ENCODE measurements at regions of chr1 and their contacts with region 1.

Region 1: DNA sequence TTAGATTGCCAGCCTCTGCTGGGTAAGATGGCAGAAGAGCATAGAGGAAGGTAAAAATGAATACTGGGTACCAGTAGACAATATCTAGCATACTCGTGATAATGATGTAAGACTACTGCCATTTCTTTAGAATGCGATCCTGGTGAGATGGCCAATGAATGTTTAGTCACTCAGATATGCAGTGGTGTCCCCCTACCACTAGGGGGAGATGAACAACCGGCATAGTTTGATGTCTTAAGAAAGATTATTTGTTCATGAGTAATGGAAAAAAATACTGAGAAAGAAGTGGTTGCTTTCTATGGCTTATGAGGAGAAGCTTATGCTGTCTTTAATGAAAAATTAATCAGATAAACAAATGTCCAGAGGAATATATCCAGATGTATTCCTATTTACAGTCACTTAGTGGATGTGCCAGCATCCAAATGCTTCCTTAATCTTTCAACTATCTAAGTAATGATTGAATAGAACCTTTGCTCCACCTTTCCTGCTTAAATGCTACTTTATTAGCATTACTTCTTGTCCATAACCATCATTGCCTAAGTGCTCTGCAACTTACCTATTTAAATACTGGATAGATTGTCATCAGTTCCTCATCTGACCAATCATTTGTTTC is 256.6 kb downstream of the ST6GALNAC3 start:
- DNase-seq: peak; percentile 68
- H3K4me3 Mint-ChIP-seq: no peak overlapping the region
- H3K27ac Mint-ChIP-seq: no peak overlapping the region
- H3K4me1 Mint-ChIP-seq: peaks cover 14% of the 10 kb centered on the region
- H3K27me3 Mint-ChIP-seq: no peaks in the 10 kb centered on the region

Region 2: DNA sequence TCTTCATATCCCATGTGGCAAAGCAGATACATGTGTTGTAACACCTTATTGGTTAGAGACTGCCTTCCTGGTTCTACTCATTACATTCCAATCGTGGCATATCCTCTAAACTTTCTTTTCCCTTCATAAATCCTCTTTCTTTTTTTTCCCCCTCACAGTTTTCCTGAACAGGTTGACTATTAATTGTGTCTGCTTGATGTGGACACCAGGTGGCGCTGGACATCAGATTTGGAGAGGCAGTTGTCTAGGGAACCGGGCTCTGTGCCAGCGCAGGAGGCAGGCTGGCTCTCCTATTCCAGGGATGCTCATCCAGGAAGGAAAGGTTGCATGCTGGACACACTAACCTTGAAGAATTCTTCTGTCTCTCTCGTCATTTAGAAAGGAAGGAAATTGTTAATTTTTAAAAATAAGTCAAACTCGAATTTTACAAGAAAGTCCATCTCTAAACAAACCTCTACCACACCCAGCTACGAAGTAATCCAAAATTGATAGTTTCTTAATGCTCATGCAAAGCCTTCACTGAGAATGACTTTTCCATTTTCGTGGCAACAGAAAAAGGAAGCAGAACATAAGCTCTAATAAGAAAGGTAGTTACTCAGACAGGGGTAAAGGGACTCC is 339.5 kb before region 1 on chr1:
- CTCF ChIA-PET with region 1: no interaction called
- intact Hi-C with region 1: loop called (anchors 5 kb)
- DNase-seq: peak; percentile 88
- H3K4me3 Mint-ChIP-seq: no peak overlapping the region
- H3K27ac Mint-ChIP-seq: no peak overlapping the region
- H3K4me1 Mint-ChIP-seq: no peaks in the 10 kb centered on the region
- H3K27me3 Mint-ChIP-seq: no peaks in the 10 kb centered on the region

Region 3: GRCh38 chr1:76090283-76091203 is 240.6 kb before region 1 on chr1:
- CTCF ChIA-PET with region 1: no interaction called
- intact Hi-C with region 1: no loop called
- DNase-seq: no peak
- H3K4me3 Mint-ChIP-seq: no peak overlapping the region
- H3K27ac Mint-ChIP-seq: no peak overlapping the region
- H3K4me1 Mint-ChIP-seq: peaks cover 7% of the 10 kb centered on the region
- H3K27me3 Mint-ChIP-seq: no peaks in the 10 kb centered on the region

Region 4: DNA sequence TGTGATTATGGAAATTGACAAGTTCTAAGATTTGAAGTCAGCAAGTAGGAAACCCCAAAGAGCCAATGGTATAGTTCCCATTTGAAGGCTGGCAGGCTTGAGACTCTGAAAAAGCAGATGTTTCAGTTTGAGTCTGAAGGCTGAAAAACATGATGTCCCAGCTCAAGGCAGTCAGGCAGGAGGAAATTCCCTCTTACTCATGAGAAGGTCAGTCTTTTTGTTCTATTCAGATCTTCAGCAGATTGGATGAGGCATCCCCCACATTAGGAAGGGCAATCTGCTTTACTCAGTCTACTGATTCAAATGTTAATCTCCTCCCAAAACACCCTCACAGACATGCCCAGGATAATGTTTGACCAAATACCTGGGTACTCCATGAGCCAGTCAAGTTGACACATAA is 163.7 kb after region 1 on chr1:
- CTCF ChIA-PET with region 1: no interaction called
- intact Hi-C with region 1: loop called (anchors 1 kb)
- DNase-seq: peak; percentile 60
- H3K4me3 Mint-ChIP-seq: no peak overlapping the region
- H3K27ac Mint-ChIP-seq: peak overlapping the region; percentile 67
- H3K4me1 Mint-ChIP-seq: peaks cover 17% of the 10 kb centered on the region
- H3K27me3 Mint-ChIP-seq: no peaks in the 10 kb centered on the region

Region 5: GRCh38 chr1:76501586-76502219 is 170.6 kb after region 1 on chr1:
- CTCF ChIA-PET with region 1: interaction called, 3 read pairs
- intact Hi-C with region 1: loop called (anchors 2 kb)
- DNase-seq: peak; percentile 11
- H3K4me3 Mint-ChIP-seq: peak overlapping the region; percentile 32
- H3K27ac Mint-ChIP-seq: no peak overlapping the region
- H3K4me1 Mint-ChIP-seq: peaks cover 16% of the 10 kb centered on the region
- H3K27me3 Mint-ChIP-seq: no peaks in the 10 kb centered on the region

Region 6: DNA sequence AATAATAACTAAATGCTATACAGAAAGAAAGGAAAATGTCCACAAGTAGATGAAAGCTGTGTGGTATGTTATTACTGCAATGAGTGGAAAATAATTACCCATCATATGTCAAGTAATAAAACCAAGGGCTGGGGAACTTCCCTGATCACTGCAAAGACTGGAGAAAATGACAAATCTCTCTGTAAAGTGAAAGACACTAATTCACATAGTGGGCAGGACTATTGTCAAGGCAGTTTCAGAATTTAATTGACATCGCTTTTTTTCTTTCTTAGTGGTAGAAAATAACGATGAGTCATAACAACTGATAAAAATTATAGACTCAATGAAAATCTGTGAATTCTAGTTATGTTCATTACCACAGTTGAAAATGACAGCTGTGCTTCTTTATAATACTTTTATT is 382.4 kb after region 1 on chr1:
- CTCF ChIA-PET with region 1: no interaction called
- intact Hi-C with region 1: loop called (anchors 1 kb)
- DNase-seq: peak; percentile 9
- H3K4me3 Mint-ChIP-seq: no peak overlapping the region
- H3K27ac Mint-ChIP-seq: no peak overlapping the region
- H3K4me1 Mint-ChIP-seq: peaks cover 7% of the 10 kb centered on the region
- H3K27me3 Mint-ChIP-seq: peaks cover 9% of the 10 kb centered on the region

Region 7: DNA sequence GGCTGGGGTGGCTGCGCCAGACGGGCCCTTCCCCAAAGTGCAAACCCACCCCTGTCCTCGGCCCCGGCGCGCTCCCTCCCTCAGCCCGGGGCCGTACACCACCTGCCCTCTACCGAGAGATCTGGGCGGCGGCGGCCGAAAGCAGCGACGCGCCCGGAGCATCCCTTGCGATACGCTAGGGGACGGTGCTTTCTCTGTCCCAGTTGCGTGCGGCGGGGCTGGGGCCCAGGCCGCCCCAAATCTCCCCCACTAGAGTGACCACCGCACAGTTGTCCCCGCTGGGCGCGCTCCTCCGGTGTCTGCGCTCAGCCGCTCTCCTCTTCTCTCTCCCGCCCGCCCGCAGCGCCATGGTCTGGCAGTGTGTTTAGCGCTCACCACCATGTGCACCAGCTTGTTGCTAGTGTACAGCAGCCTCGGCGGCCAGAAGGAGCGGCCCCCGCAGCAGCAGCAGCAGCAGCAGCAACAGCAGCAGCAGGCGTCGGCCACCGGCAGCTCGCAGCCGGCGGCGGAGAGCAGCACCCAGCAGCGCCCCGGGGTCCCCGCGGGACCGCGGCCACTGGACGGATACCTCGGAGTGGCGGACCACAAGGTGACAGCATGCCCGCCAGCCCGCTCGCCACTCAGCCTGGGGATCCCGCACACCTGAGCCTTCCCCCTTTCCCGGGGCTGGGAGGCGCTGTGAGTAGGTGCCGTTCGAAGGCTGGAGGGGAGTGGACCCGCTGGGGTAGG is 537.2 kb after region 1 on chr1:
- CTCF ChIA-PET with region 1: no interaction called
- intact Hi-C with region 1: loop called (anchors 5 kb)
- DNase-seq: peak; percentile 40
- H3K4me3 Mint-ChIP-seq: peak overlapping the region; percentile 72
- H3K27ac Mint-ChIP-seq: no peak overlapping the region
- H3K4me1 Mint-ChIP-seq: peaks cover 7% of the 10 kb centered on the region
- H3K27me3 Mint-ChIP-seq: peaks cover 50% of the 10 kb centered on the region

Region 8: DNA sequence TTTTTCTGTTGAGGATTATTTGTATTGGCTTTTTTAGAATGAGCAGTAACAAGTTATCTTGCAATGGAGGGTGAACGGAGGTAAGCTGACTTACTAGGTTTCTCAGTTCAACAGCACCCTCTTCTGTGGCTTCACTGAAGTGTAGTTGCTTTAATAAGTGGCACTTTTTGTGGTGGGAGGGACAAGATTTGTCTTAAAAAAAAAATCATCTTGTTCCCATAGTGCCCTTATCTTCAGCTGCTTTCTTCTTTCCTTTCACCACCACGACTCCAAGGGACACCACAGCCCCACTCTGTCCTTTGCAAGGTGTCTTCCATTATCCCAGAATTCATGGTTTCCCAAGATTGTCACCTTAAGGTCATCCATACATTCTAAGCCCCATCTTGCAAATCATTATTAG is 795.2 kb after region 1 on chr1:
- CTCF ChIA-PET with region 1: no interaction called
- intact Hi-C with region 1: loop called (anchors 1 kb)
- DNase-seq: peak; percentile 36
- H3K4me3 Mint-ChIP-seq: no peak overlapping the region
- H3K27ac Mint-ChIP-seq: no peak overlapping the region
- H3K4me1 Mint-ChIP-seq: no peaks in the 10 kb centered on the region
- H3K27me3 Mint-ChIP-seq: no peaks in the 10 kb centered on the region

Measured in activated naive CD4-positive, alpha-beta T cell treated with anti-CD3 and anti-CD28 coated beads for 36 hours (primary cell).